Endothelial cell of umbilical vein (primary cell): ENCODE measurements at regions of chr11 and their contacts with region 1.

Region 1: DNA sequence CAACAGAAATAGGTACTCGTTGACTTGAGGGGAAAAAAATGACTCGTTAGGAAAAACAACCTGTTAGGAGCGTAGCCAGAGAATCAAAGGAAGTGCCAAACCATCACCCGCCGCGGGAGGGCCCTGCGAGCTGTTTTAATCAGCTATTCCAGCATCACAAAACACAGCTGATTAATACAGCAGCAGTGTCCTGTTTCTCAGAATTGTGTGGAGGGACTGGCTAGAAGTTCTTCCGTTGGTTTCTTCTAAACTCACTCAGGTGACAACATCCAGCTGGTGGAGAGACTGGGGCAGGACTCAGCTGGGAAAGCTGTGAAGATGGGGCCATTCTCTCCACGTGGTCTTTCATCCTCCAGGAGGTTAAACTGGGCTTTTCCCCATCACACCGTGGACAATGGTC is 28.0 kb downstream of the HSPA8 start:
- DNase-seq: peak; percentile 32
- H3K4me3 ChIP-seq: no peak overlapping the region
- H3K27ac ChIP-seq: no peak overlapping the region
- H3K4me1 ChIP-seq: no peaks in the 10 kb centered on the region
- H3K27me3 ChIP-seq: peaks cover 0 to 3% of the 10 kb centered on the region in 2 experiments
- CTCF ChIP-seq: peak; percentile 13 to 36
- POLR2A ChIP-seq: no peak

Region 2: GRCh38 chr11:123046473-123047259 is 12.8 kb after region 1 on chr11:
- CTCF ChIA-PET with region 1: interaction called, 10 read pairs
- POLR2A ChIA-PET with region 1: no interaction called
- dilution Hi-C with region 1: no loop called
- intact Hi-C with region 1: no loop called
- DNase-seq: no peak
- H3K4me3 ChIP-seq: no peak overlapping the region
- H3K27ac ChIP-seq: no peak overlapping the region
- H3K4me1 ChIP-seq: no peaks in the 10 kb centered on the region
- H3K27me3 ChIP-seq: peaks cover 0 to 4% of the 10 kb centered on the region in 2 experiments
- CTCF ChIP-seq: no peak
- POLR2A ChIP-seq: no peak

Region 3: GRCh38 chr11:123054301-123055065 is 20.6 kb after region 1 on chr11:
- CTCF ChIA-PET with region 1: interaction called, 31 read pairs
- POLR2A ChIA-PET with region 1: no interaction called
- dilution Hi-C with region 1: no loop called
- intact Hi-C with region 1: no loop called
- DNase-seq: peak; percentile 68
- H3K4me3 ChIP-seq: no peak overlapping the region
- H3K27ac ChIP-seq: no peak overlapping the region
- H3K4me1 ChIP-seq: peaks cover 13% of the 10 kb centered on the region
- H3K27me3 ChIP-seq: no peaks in the 10 kb centered on the region
- CTCF ChIP-seq: peak; percentile 62 to 65
- POLR2A ChIP-seq: peak; percentile 50